ENCODE measurements at regions of chr11 and their contacts with region 1.

Region 1: GRCh38 chr11:33257897-33258630 is 883 bp downstream of the HIPK3 start:
- DNase-seq: peak; percentile 77 to 85 (median 80)
- H3K4me3 ChIP-seq: peak overlapping the region; percentile 53 to 85
- H3K4me3 Mint-ChIP-seq: peak overlapping the region; percentile 90 to 99 (median 96)
- H3K27ac ChIP-seq: peak overlapping the region; percentile 96
- H3K27ac Mint-ChIP-seq: peak overlapping the region; percentile 96 to 99 (median 98)
- H3K4me1 ChIP-seq: peaks cover 42% of the 10 kb centered on the region
- H3K4me1 Mint-ChIP-seq: peaks cover 29 to 51% (median 39%) of the 10 kb centered on the region in 4 donors
- H3K27me3 ChIP-seq: no peaks in the 10 kb centered on the region
- H3K27me3 Mint-ChIP-seq: no peaks in the 10 kb centered on the region

Region 2: GRCh38 chr11:32893343-32894148 is 364.5 kb before region 1 on chr11:
- CTCF ChIA-PET with region 1: no interaction called
- POLR2A ChIA-PET with region 1: no interaction called
- intact Hi-C with region 1: loop called (anchors 2 kb)
- DNase-seq: peak in 3 of 5 donors; percentile 36 to 61 (median 38)
- H3K4me3 ChIP-seq: peak overlapping the region; percentile 57 to 72
- H3K4me3 Mint-ChIP-seq: peak overlapping the region; percentile 87 to 96 (median 94)
- H3K27ac ChIP-seq: peak overlapping the region; percentile 58
- H3K27ac Mint-ChIP-seq: peak overlapping the region; percentile 84 to 94 (median 88)
- H3K4me1 ChIP-seq: peaks cover 17% of the 10 kb centered on the region
- H3K4me1 Mint-ChIP-seq: peaks cover 20 to 36% (median 29%) of the 10 kb centered on the region in 4 donors
- H3K27me3 ChIP-seq: no peaks in the 10 kb centered on the region
- H3K27me3 Mint-ChIP-seq: no peaks in the 10 kb centered on the region

Region 3: GRCh38 chr11:33161120-33162005 is 96.7 kb before region 1 on chr11 and contains the start of gene CSTF3:
- CTCF ChIA-PET with region 1: interaction called, 3 read pairs
- POLR2A ChIA-PET with region 1: interaction called, 10 read pairs
- intact Hi-C with region 1: loop called (anchors 1 kb)
- DNase-seq: peak; percentile 89 to 96 (median 90)
- H3K4me3 ChIP-seq: peak within 1 kb of the TSS; percentile 94 to 95
- H3K4me3 Mint-ChIP-seq: peak within 1 kb of the TSS; percentile 94 to 100 (median 100)
- H3K27ac ChIP-seq: peak within 1 kb of the TSS; percentile 87
- H3K27ac Mint-ChIP-seq: peak within 1 kb of the TSS; percentile 95 to 100 (median 98)
- H3K4me1 ChIP-seq: peaks cover 48% of the 10 kb centered on the region
- H3K4me1 Mint-ChIP-seq: peaks cover 32 to 64% (median 47%) of the 10 kb centered on the region in 4 donors
- H3K27me3 ChIP-seq: no peaks in the 10 kb centered on the region
- H3K27me3 Mint-ChIP-seq: no peaks in the 10 kb centered on the region
- total RNA-seq, gene CSTF3: 33.5 to 34.0 TPM

Region 4: GRCh38 chr11:33606762-33607161 is 348.7 kb after region 1 on chr11:
- CTCF ChIA-PET with region 1: no interaction called
- POLR2A ChIA-PET with region 1: no interaction called
- intact Hi-C with region 1: no loop called
- DNase-seq: no peak
- H3K4me3 ChIP-seq: no peak overlapping the region
- H3K4me3 Mint-ChIP-seq: no peak overlapping the region
- H3K27ac ChIP-seq: no peak overlapping the region
- H3K27ac Mint-ChIP-seq: no peak overlapping the region
- H3K4me1 ChIP-seq: no peaks in the 10 kb centered on the region
- H3K4me1 Mint-ChIP-seq: no peaks in the 10 kb centered on the region
- H3K27me3 ChIP-seq: no peaks in the 10 kb centered on the region
- H3K27me3 Mint-ChIP-seq: peaks cover 6% of the 10 kb centered on the region in 2 donors

Region 5: DNA sequence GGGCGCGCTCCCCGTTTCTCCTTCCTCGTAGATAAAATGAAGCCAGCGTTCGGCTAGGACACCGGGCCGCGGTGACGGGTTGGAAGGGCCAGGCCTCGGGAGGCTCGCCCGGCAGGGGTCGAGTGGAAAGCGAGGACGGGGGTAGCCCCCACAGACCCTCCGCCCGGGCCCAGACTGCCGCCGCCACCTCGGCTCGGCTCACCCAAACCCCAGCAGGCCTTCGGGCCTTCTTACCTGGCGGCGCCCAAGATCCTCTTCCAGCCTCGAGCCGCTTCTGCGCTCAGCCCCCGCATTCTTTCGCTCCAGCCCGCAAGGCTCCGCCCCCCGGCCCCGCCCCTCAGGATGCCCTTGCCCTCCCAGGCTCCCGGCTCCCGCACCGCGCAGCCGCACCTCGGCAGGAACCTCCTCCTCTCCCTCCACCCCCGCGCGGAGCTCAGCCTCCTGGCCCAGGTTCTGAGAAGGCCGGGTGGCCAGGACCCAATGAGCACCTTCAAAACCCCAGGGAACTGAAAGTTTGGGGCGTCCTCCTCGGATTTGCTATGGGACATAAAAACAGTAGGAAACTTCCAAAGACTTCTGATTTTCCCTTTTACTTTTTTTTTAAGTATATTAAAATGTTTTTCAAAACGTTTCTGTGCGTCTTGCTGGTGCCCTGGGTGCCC is 478.2 kb after region 1 on chr11 and contains the start of gene CD59:
- CTCF ChIA-PET with region 1: no interaction called
- POLR2A ChIA-PET with region 1: interaction called, 3 read pairs
- intact Hi-C with region 1: loop called (anchors 10 kb)
- DNase-seq: peak; percentile 82 to 89 (median 83)
- H3K4me3 ChIP-seq: peak within 1 kb of the TSS; percentile 76 to 91
- H3K4me3 Mint-ChIP-seq: peak within 1 kb of the TSS; percentile 88 to 96 (median 92)
- H3K27ac ChIP-seq: peak within 1 kb of the TSS; percentile 75
- H3K27ac Mint-ChIP-seq: peak within 1 kb of the TSS; percentile 78 to 94 (median 90)
- H3K4me1 ChIP-seq: peaks cover 30% of the 10 kb centered on the region
- H3K4me1 Mint-ChIP-seq: peaks cover 25 to 44% (median 37%) of the 10 kb centered on the region in 4 donors
- H3K27me3 ChIP-seq: no peaks in the 10 kb centered on the region
- H3K27me3 Mint-ChIP-seq: no peaks in the 10 kb centered on the region
- total RNA-seq, gene CD59: 95.8 to 100 TPM

Region 6: GRCh38 chr11:34438529-34439507 is 1180.8 kb after region 1 on chr11 and contains the start of gene CAT:
- CTCF ChIA-PET with region 1: no interaction called
- POLR2A ChIA-PET with region 1: interaction called, 3 read pairs
- intact Hi-C with region 1: loop called (anchors 2 kb)
- DNase-seq: peak; percentile 96 to 97 (median 96)
- H3K4me3 ChIP-seq: peak within 1 kb of the TSS; percentile 52 to 90
- H3K4me3 Mint-ChIP-seq: peak within 1 kb of the TSS; percentile 94 to 99 (median 98)
- H3K27ac ChIP-seq: peak within 1 kb of the TSS; percentile 75
- H3K27ac Mint-ChIP-seq: peak within 1 kb of the TSS; percentile 93 to 98 (median 95)
- H3K4me1 ChIP-seq: peaks cover 28% of the 10 kb centered on the region
- H3K4me1 Mint-ChIP-seq: peaks cover 22 to 41% (median 31%) of the 10 kb centered on the region in 4 donors
- H3K27me3 ChIP-seq: no peaks in the 10 kb centered on the region
- H3K27me3 Mint-ChIP-seq: no peaks in the 10 kb centered on the region
- total RNA-seq, gene CAT: 35.1 to 38.4 TPM